Activated CD8-positive, alpha-beta T cell treated with anti-CD3 and anti-CD28 coated beads for 36 hours (primary cell): ENCODE measurements at regions of chr5 and their contacts with region 1.

Region 1: GRCh38 chr5:181191529-181192394 is 13.2 kb downstream of the TRIM7 start:
- DNase-seq: peak; percentile 94
- ATAC-seq: peak; percentile 74
- H3K4me3 Mint-ChIP-seq: peak overlapping the region; percentile 91
- H3K27ac Mint-ChIP-seq: peak overlapping the region; percentile 97
- H3K4me1 Mint-ChIP-seq: peaks cover 27% of the 10 kb centered on the region
- H3K27me3 Mint-ChIP-seq: peaks cover 2% of the 10 kb centered on the region
- CTCF ChIP-seq: no peak

Region 2: DNA sequence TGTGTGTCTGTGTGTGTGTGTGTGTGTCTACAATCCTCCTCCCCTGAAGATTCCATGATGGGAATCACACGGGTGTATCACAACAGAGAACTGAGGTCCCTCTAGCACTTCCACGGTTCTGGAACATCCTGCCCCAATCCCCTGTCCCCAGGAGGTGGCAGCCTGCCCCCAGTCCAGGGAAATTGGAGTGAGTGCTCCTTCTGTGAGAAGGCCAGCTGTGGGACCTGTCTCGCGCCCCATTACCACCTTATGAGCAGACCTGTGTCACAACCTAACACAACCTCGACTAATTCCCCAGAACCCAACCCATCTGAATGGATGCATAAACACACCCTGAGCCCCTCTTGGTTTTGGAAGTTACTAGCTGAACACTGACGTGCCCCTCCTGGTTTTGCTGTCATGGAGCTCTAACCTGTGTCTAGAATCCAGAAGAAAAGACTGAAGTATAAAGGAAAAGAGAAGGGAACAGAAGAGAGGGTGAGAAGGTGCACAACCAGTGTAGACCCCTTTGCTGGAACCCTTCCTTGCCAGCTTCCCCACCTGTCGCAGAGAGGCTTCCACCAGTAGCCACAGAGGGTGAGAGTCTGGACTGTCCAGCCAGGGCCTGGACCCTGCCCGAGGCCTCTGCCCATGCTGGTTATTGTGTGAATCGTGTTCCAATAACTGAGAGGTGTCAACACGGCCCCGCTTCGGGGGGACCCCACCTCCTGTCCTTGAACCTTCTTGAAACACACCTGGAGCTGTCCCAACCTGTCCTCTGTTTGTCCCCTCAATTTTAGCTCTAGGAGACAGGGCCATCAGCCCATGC is 148.3 kb before region 1 on chr5:
- CTCF ChIA-PET with region 1: no interaction called
- POLR2A ChIA-PET with region 1: no interaction called
- intact Hi-C with region 1: no loop called
- DNase-seq: no peak
- ATAC-seq: no peak
- H3K4me3 Mint-ChIP-seq: no peak overlapping the region
- H3K27ac Mint-ChIP-seq: no peak overlapping the region
- H3K4me1 Mint-ChIP-seq: no peaks in the 10 kb centered on the region
- H3K27me3 Mint-ChIP-seq: peaks cover 36% of the 10 kb centered on the region
- CTCF ChIP-seq: no peak

Region 3: GRCh38 chr5:181114844-181115778 is 76.7 kb before region 1 on chr5:
- CTCF ChIA-PET with region 1: no interaction called
- POLR2A ChIA-PET with region 1: no interaction called
- intact Hi-C with region 1: no loop called
- DNase-seq: no peak
- ATAC-seq: no peak
- H3K4me3 Mint-ChIP-seq: no peak overlapping the region
- H3K27ac Mint-ChIP-seq: no peak overlapping the region
- H3K4me1 Mint-ChIP-seq: peaks cover 6% of the 10 kb centered on the region
- H3K27me3 Mint-ChIP-seq: peaks cover 63% of the 10 kb centered on the region
- CTCF ChIP-seq: no peak

Region 4: DNA sequence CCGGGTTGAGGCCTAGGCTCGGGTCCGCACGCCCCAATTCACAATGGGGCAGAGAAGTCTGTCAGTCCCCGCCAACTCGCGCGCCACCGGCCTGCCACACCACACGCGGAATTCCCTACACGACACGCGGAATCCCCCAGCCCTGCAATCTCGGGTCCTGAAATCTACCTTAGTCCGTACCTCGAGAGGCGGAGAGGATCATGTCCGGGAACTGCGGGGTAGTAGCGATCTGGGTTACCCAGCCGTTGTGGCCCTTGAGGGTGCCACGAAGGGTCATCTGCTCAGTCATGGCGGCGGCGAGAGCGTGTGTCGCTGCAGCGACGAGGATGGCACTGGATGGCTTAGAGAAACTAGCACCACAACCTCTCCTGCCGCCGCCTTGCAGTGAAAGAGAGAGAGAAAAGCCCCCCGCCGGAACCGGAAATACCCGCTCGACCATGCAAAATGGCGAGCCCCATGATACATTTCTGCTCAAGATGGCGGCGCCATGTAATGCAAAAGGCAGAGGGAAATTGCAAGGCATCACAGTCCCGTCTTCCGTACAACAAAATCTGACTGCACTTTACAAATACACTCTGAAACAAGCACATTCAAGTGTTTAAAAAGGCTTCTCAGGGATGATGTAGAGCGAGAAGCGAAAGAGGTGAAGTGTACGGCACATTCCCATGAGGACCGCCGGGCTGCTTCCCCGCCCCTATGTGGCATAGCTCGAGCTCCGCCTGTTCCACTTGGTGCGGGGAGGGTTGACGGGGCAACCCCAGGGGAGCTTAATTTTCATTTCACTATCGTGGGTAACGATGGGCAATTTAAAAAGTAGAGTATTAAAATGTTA is 52.0 kb after region 1 on chr5 and contains the start of gene RACK1:
- CTCF ChIA-PET with region 1: no interaction called
- POLR2A ChIA-PET with region 1: interaction called, 46 read pairs
- intact Hi-C with region 1: no loop called
- DNase-seq: peak; percentile 94
- ATAC-seq: peak; percentile 68
- H3K4me3 Mint-ChIP-seq: peak within 1 kb of the TSS; percentile 99
- H3K27ac Mint-ChIP-seq: peak within 1 kb of the TSS; percentile 100
- H3K4me1 Mint-ChIP-seq: peaks cover 42% of the 10 kb centered on the region
- H3K27me3 Mint-ChIP-seq: no peaks in the 10 kb centered on the region
- CTCF ChIP-seq: no peak
- total RNA-seq, gene RACK1: 2,759 to 2,801 TPM

Region 5: GRCh38 chr5:181281077-181281983 is 89.6 kb after region 1 on chr5:
- CTCF ChIA-PET with region 1: no interaction called
- POLR2A ChIA-PET with region 1: no interaction called
- intact Hi-C with region 1: no loop called
- DNase-seq: no peak
- ATAC-seq: no peak
- H3K4me3 Mint-ChIP-seq: no peak overlapping the region
- H3K27ac Mint-ChIP-seq: no peak overlapping the region
- H3K4me1 Mint-ChIP-seq: peaks cover 2% of the 10 kb centered on the region
- H3K27me3 Mint-ChIP-seq: no peaks in the 10 kb centered on the region
- CTCF ChIP-seq: no peak